ENCODE measurements at regions of chr3 and their contacts with region 1.

Region 1: GRCh38 chr3:42229942-42230688 is 35.9 kb downstream of the CCK start:
- DNase-seq: peak in 2 of 7 donors; percentile 8 to 31
- H3K4me3 ChIP-seq: no peak overlapping the region
- H3K27ac ChIP-seq: no peak overlapping the region
- H3K4me1 ChIP-seq: no peaks in the 10 kb centered on the region
- H3K27me3 ChIP-seq: no peaks in the 10 kb centered on the region
- CTCF ChIP-seq: peak; percentile 18 to 58 (median 48)
- POLR2A ChIP-seq: no peak

Region 2: GRCh38 chr3:42443819-42444436 is 213.8 kb after region 1 on chr3:
- intact Hi-C with region 1: loop called in 1 of 2 experiments (anchors 5 kb)
- DNase-seq: peak; percentile 73 to 93 (median 84)
- H3K4me3 ChIP-seq: no peak overlapping the region
- H3K27ac ChIP-seq: no peak overlapping the region
- H3K4me1 ChIP-seq: no peaks in the 10 kb centered on the region
- H3K27me3 ChIP-seq: no peaks in the 10 kb centered on the region
- CTCF ChIP-seq: peak; percentile 88 to 97 (median 95)
- POLR2A ChIP-seq: no peak

Measured in adrenal gland (tissue), 19 donors.